ENCODE measurements at regions of chr14 and their contacts with region 1.

Region 1: DNA sequence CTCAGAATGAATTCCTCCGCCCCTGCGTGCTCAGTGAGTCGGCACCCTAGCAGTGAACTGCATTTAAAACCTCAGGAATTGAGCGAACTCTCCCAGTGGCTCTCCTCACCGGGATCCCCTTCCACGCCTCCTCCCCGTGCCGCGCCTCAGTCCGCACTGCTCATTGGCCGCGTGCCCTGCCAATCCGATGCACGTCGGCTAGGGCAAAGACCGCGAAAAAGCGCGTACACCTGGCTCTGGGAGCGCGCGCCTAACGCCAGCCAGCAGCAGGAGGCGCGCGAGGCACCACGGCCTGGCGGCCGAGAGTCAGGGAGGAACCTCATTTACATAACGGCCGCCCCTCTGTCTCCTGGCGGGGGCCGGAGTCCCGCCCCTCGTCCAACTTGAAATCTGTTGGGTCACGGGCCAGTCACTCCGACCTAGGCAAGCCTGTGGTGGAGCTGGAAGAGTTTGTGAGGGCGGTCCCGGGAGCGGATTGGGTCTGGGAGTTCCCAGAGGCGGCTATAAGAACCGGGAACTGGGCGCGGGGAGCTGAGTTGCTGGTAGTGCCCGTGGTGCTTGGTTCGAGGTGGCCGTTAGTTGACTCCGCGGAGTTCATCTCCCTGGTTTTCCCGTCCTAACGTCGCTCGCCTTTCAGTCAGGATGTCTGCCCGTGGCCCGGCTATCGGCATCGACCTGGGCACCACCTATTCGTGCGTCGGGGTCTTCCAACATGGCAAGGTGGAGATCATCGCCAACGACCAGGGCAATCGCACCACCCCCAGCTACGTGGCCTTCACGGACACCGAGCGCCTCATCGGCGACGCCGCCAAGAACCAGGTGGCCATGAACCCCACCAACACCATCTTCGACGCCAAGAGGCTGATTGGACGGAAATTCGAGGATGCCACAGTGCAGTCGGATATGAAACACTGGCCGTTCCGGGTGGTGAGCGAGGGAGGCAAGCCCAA is at the start of gene HSPA2:
- DNase-seq: peak; percentile 89 to 94 (median 90)
- H3K4me3 ChIP-seq: peak within 1 kb of the TSS; percentile 92
- H3K4me3 Mint-ChIP-seq: peak within 1 kb of the TSS; percentile 92 to 99 (median 95)
- H3K27ac ChIP-seq: no peak within 1 kb of the TSS
- H3K27ac Mint-ChIP-seq: peak within 1 kb of the TSS; percentile 59 to 94 (median 87)
- H3K4me1 ChIP-seq: peaks cover 18% of the 10 kb centered on the region
- H3K4me1 Mint-ChIP-seq: peaks cover 26 to 39% (median 37%) of the 10 kb centered on the region in 3 donors
- H3K27me3 ChIP-seq: no peaks in the 10 kb centered on the region
- H3K27me3 Mint-ChIP-seq: peaks cover 0 to 6% of the 10 kb centered on the region in 2 donors
- total RNA-seq, gene HSPA2: 1.9 TPM

Region 2: GRCh38 chr14:64488590-64489099 is 51.8 kb before region 1 on chr14:
- CTCF ChIA-PET with region 1: no interaction called
- POLR2A ChIA-PET with region 1: no interaction called
- DNase-seq: no peak
- H3K4me3 ChIP-seq: no peak overlapping the region
- H3K4me3 Mint-ChIP-seq: no peak overlapping the region
- H3K27ac ChIP-seq: no peak overlapping the region
- H3K27ac Mint-ChIP-seq: peak overlapping the region in 2 of 8 donors; percentile 29 to 74
- H3K4me1 ChIP-seq: peaks cover 14% of the 10 kb centered on the region
- H3K4me1 Mint-ChIP-seq: peaks cover 38 to 65% (median 51%) of the 10 kb centered on the region in 3 donors
- H3K27me3 ChIP-seq: no peaks in the 10 kb centered on the region
- H3K27me3 Mint-ChIP-seq: no peaks in the 10 kb centered on the region

Region 3: DNA sequence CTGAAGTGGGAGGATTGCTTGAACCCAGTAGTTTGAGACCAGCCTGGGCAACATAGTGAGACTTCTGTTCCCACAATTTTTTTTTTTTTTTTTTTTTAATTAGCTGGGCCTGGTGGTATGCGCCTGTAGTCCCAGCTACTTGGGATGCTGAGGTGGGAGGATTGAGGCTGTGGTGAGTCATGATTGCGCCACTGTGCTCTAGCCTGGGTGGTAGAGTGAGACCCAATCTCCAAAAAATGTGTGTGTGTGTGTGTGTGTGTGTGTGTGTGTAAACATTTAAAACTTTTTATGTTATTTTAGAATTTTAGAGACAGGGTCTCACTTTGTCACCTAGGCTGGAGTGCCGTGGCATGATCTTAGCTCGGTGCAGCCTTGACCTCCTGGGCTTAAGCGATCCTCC is 16.0 kb after region 1 on chr14:
- CTCF ChIA-PET with region 1: interaction called, 17 read pairs
- POLR2A ChIA-PET with region 1: interaction called, 7 read pairs
- DNase-seq: no peak
- H3K4me3 ChIP-seq: no peak overlapping the region
- H3K4me3 Mint-ChIP-seq: no peak overlapping the region
- H3K27ac ChIP-seq: no peak overlapping the region
- H3K27ac Mint-ChIP-seq: peak overlapping the region in 1 of 8 donors; percentile 43
- H3K4me1 ChIP-seq: peaks cover 6% of the 10 kb centered on the region
- H3K4me1 Mint-ChIP-seq: peaks cover 0 to 10% (median 8%) of the 10 kb centered on the region in 3 donors
- H3K27me3 ChIP-seq: no peaks in the 10 kb centered on the region
- H3K27me3 Mint-ChIP-seq: peaks cover 0 to 2% of the 10 kb centered on the region in 2 donors

Measured in CD8-positive, alpha-beta memory T cell (primary cell).